Right ventricle myocardium inferior (tissue), 1 donor: ENCODE measurements at regions of chr20 and their contacts with region 1.

Region 1: GRCh38 chr20:36861875-36862801 is 13.8 kb upstream of the TLDC2 start:
- DNase-seq: peak; percentile 90
- ATAC-seq: peak; percentile 63

Region 2: GRCh38 chr20:36632487-36633284 is 229.5 kb before region 1 on chr20:
- intact Hi-C with region 1: no loop called
- DNase-seq: no peak
- ATAC-seq: no peak

Region 3: GRCh38 chr20:36773597-36774390 is 88.3 kb before region 1 on chr20 and contains the start of gene DSN1:
- intact Hi-C with region 1: loop called (anchors 2 kb)
- DNase-seq: peak; percentile 100
- ATAC-seq: peak; percentile 96
- total RNA-seq, gene DSN1: 4.4 TPM

Region 4: DNA sequence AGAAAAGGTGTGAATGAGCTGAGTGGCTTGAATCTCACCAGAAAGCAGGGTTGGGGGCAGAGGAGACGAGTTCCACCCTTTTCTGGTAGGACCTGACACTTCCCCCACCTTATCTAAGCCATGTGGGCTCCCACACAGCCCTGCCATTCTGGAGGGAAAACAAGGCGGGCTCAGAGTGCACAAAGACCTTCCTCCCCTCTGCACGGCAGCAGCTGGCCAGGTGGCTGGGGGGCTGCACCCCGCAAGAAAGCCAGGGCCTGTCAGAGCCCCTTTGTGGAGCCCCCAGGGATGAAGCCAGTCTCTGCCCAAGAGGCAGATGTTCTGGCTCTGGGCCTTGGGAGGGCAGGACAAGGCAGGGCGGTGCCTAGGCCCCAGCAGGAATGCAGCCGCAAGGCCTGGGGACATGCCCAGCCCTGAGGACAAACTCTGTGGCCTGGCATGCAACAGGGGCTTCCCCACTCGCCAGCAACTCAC is 40.1 kb before region 1 on chr20:
- intact Hi-C with region 1: loop called (anchors 5 kb)
- DNase-seq: no peak
- ATAC-seq: peak; percentile 67

Region 5: GRCh38 chr20:36830791-36831691 is 31.1 kb before region 1 on chr20:
- intact Hi-C with region 1: loop called (anchors 2 kb)
- DNase-seq: peak; percentile 87
- ATAC-seq: peak; percentile 67